Mammary epithelial cell (primary cell): ENCODE measurements at regions of chr1 and their contacts with region 1.

Region 1: DNA sequence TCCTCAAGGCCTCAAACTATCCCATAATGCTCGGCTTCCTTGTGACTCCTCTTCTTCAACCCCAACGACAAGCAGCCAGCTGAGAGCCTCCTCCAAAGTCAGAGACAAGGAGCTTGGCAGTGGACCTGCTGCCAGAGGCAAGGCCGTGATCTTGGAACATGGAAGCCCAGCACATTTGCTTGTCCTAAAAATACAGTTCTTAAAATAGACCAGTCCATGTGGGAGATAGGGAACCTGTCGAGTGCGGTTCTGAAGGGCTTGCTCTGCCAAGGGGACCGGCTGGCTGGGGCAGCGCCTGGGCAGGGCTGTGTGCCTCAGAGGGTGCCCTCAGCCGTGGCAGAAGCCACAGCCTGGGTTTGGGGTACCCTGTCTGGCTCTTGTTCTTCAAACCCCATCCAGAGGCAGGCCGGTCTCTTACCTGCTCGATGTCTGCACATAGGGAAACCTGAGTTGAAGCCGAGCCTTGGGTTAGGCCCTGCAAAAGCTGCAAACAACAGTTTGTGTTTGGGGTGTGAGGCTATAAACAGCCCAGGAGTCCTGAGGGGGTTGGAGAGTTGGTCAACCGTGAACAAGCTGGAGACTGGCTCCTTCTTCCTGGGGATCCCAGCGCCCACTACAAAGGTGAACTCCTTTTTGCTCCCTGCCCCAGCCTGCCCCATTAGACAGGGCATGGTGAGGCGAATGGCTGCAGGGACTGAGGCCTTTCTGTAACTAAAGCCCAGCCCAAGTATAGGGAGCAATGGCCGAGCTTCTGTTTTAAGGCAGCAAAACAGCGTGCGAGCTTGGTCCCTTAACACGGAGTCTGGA is 228.8 kb downstream of the CAMTA1 start:
- DNase-seq: no peak
- H3K4me3 ChIP-seq: no peak overlapping the region
- H3K27ac ChIP-seq: no peak overlapping the region
- H3K4me1 ChIP-seq: no peaks in the 10 kb centered on the region
- H3K27me3 ChIP-seq: no peaks in the 10 kb centered on the region
- CTCF ChIP-seq: no peak

Region 2: DNA sequence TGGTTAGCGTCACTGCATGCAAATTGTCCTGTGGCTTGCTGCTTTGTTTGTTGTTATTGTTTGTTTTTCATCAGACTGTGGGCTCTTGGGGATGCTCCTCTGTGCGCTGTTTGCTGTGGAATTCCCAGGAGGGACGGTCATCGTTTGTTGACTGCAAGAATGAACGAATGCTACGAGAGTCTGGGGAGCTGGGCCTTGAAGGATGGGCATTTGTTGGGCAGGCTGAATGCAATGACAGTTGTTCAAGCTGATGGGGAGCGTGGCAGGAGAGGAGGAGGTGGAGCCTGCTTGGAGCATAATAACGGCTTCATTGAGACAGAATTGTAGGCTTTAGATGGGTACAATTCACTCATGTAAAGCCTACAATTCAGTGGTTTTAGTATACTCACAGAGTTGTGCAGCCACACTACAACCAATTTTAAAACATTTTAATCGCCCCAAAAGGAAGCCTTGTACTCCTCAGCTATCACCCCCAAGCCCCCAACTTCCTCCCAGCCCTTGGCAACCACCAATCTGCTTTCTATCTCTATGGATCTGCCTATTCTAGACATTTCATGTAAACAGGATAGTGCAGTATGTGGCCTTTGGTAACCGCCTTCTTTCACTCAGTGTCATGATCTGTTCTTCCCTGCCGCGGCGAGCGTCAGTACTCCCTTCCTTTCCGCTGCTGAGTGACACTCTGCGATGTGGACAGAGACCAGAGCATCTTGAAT is 38.5 kb before region 1 on chr1:
- CTCF ChIA-PET with region 1: no interaction called
- dilution Hi-C with region 1: loop called (anchors 5 kb)
- in situ Hi-C with region 1: no loop called
- intact Hi-C with region 1: no loop called
- DNase-seq: no peak
- H3K4me3 ChIP-seq: no peak overlapping the region
- H3K27ac ChIP-seq: no peak overlapping the region
- H3K4me1 ChIP-seq: no peaks in the 10 kb centered on the region
- H3K27me3 ChIP-seq: no peaks in the 10 kb centered on the region
- CTCF ChIP-seq: no peak